ENCODE measurements at regions of chr7 and their contacts with region 1.

Region 1: GRCh38 chr7:36291387-36292316 is 98.0 kb upstream of the ANLN start:
- DNase-seq: peak; percentile 96
- H3K4me3 Mint-ChIP-seq: peak overlapping the region; percentile 21
- H3K27ac Mint-ChIP-seq: peak overlapping the region; percentile 56
- H3K4me1 Mint-ChIP-seq: peaks cover 68% of the 10 kb centered on the region
- H3K27me3 Mint-ChIP-seq: no peaks in the 10 kb centered on the region
- CTCF ChIP-seq: peak; percentile 100

Region 2: DNA sequence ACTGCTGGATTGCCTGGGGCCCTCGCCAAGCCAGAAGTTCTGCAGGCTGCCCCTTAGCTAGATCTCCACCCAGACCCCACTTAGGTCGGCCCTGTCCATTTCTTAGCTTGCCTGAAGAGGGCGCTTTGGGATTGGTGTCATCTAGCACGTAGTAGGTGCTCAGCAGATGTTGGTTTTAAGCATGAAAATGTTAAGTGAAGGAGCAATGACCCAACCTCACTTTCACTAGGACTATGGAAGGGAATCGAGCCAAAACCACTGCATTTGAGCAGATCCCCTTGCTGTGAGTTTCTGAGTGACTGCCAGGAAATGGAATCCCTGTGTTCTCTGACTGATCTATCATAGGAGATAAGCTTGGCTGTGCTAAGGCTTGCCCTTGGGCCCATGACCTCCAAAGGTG is 270.3 kb before region 1 on chr7:
- CTCF ChIA-PET with region 1: interaction called, 8 read pairs
- intact Hi-C with region 1: loop called (anchors 1 kb)
- DNase-seq: peak; percentile 63
- H3K4me3 Mint-ChIP-seq: no peak overlapping the region
- H3K27ac Mint-ChIP-seq: no peak overlapping the region
- H3K4me1 Mint-ChIP-seq: no peaks in the 10 kb centered on the region
- H3K27me3 Mint-ChIP-seq: no peaks in the 10 kb centered on the region
- CTCF ChIP-seq: peak; percentile 79

Region 3: DNA sequence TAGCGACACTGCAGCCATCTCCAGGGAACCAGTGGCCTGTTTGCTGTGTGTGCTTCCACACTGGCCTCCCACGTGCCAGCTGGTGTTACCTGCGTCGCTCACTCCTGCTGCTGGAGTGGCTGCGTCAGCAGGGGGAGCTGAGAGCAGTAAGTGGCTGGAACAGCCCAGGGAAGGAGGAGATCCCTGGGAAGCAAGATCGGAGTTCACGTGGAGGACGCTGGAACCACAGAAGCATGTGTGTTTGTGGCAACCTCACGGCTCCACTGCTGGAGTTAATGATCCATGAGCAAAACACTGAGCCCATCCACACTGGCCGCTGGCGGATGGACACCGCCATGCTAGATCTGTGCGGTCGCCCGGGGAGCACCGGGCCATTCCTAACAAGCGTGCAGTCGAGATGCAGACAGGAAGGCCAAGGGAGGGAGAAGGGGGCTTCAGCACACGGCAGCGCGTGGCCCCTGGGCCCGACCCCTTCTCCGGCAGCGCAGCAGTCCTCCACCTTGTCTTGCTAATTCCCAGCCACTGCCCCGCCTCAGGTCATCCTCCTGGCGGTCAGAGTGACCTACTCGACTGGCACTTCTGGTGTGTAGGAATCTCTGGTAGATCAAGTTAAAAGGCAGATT is 207.1 kb before region 1 on chr7:
- CTCF ChIA-PET with region 1: interaction called, 4 read pairs
- intact Hi-C with region 1: loop called (anchors 2 kb)
- DNase-seq: peak; percentile 83
- H3K4me3 Mint-ChIP-seq: no peak overlapping the region
- H3K27ac Mint-ChIP-seq: no peak overlapping the region
- H3K4me1 Mint-ChIP-seq: no peaks in the 10 kb centered on the region
- H3K27me3 Mint-ChIP-seq: no peaks in the 10 kb centered on the region
- CTCF ChIP-seq: peak; percentile 40

Region 4: GRCh38 chr7:36128448-36129047 is 163.1 kb before region 1 on chr7:
- CTCF ChIA-PET with region 1: interaction called, 10 read pairs
- intact Hi-C with region 1: loop called (anchors 1 kb)
- DNase-seq: peak; percentile 91
- H3K4me3 Mint-ChIP-seq: peak overlapping the region; percentile 52
- H3K27ac Mint-ChIP-seq: peak overlapping the region; percentile 76
- H3K4me1 Mint-ChIP-seq: peaks cover 38% of the 10 kb centered on the region
- H3K27me3 Mint-ChIP-seq: no peaks in the 10 kb centered on the region
- CTCF ChIP-seq: peak; percentile 91

Region 5: GRCh38 chr7:36207451-36208291 is 84.0 kb before region 1 on chr7:
- CTCF ChIA-PET with region 1: no interaction called
- intact Hi-C with region 1: loop called (anchors 5 kb)
- DNase-seq: peak; percentile 31
- H3K4me3 Mint-ChIP-seq: peak overlapping the region; percentile 6
- H3K27ac Mint-ChIP-seq: peak overlapping the region; percentile 72
- H3K4me1 Mint-ChIP-seq: peaks cover 63% of the 10 kb centered on the region
- H3K27me3 Mint-ChIP-seq: no peaks in the 10 kb centered on the region
- CTCF ChIP-seq: no peak

Region 6: GRCh38 chr7:36280840-36281812 is 10.5 kb before region 1 on chr7:
- CTCF ChIA-PET with region 1: interaction called, 14 read pairs
- intact Hi-C with region 1: no loop called
- DNase-seq: peak; percentile 86
- H3K4me3 Mint-ChIP-seq: peak overlapping the region; percentile 72
- H3K27ac Mint-ChIP-seq: peak overlapping the region; percentile 74
- H3K4me1 Mint-ChIP-seq: peaks cover 85% of the 10 kb centered on the region
- H3K27me3 Mint-ChIP-seq: no peaks in the 10 kb centered on the region
- CTCF ChIP-seq: no peak

Measured in Calu3 (cell line).